Naive thymus-derived CD4-positive, alpha-beta T cell (primary cell): ENCODE measurements at regions of chr20 and their contacts with region 1.

Region 1: GRCh38 chr20:1212607-1213396 is 9.5 kb downstream of the C20orf202 start:
- DNase-seq: peak; percentile 40 to 72 (median 60)
- ATAC-seq: peak; percentile 94
- H3K4me3 ChIP-seq: no peak overlapping the region
- H3K4me3 Mint-ChIP-seq: peak overlapping the region in 4 of 10 donors; percentile 9 to 41 (median 36)
- H3K27ac ChIP-seq: no peak overlapping the region
- H3K27ac Mint-ChIP-seq: peak overlapping the region in 5 of 9 donors; percentile 0 to 97 (median 37)
- H3K4me1 ChIP-seq: peaks cover 5 to 27% of the 10 kb centered on the region in 2 donors
- H3K4me1 Mint-ChIP-seq: peaks cover 21 to 51% (median 36%) of the 10 kb centered on the region in 7 donors
- H3K27me3 ChIP-seq: no peaks in the 10 kb centered on the region
- H3K27me3 Mint-ChIP-seq: peaks cover 0 to 16% (median 0%) of the 10 kb centered on the region in 5 donors

Region 2: DNA sequence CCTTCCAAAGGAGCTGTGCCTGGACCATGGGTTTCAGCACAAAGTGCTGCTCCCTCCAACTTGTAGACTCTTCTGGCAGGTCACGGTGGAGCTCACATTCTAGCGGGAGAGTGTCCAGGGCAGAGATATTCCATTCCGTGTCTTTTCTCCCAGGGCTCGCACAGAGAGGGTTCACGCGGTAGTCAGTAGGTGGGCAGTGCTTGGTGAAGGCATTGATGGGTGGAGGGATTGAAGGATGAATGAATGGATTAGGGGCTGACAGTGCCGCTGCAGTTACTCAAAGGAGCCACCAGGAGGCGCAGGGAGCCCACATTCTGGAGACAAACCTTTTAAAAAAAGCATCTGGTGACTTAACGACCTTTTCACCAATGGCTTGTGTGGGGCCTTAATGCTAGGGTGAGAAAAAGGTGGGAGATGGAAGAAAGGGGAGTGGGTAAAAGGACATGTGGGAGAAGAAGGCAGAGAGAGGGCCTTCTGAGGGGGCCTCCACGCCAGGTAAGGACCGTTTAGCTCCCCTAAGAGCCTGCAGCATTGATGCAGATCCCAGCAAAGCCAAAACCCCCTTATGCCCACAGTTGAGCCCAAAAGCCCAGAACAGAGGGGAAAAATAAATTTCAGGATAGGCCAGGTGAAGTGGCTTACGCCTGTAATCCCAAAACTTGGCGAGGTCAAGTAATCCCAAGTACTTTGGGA is 396.7 kb before region 1 on chr20:
- CTCF ChIA-PET with region 1: interaction called, 8 read pairs
- POLR2A ChIA-PET with region 1: interaction called, 3 read pairs
- intact Hi-C with region 1: loop called in 1 of 2 experiments (anchors 5 kb)
- DNase-seq: peak; percentile 47 to 73 (median 64)
- ATAC-seq: peak; percentile 69
- H3K4me3 ChIP-seq: no peak overlapping the region
- H3K4me3 Mint-ChIP-seq: no peak overlapping the region
- H3K27ac ChIP-seq: no peak overlapping the region
- H3K27ac Mint-ChIP-seq: peak overlapping the region in 4 of 9 donors; percentile 1 to 57 (median 31)
- H3K4me1 ChIP-seq: no peaks in the 10 kb centered on the region
- H3K4me1 Mint-ChIP-seq: peaks cover 5 to 13% (median 9%) of the 10 kb centered on the region in 7 donors
- H3K27me3 ChIP-seq: no peaks in the 10 kb centered on the region
- H3K27me3 Mint-ChIP-seq: peaks cover 9 to 27% (median 14%) of the 10 kb centered on the region in 5 donors

Region 3: GRCh38 chr20:973785-974194 is 239.0 kb before region 1 on chr20:
- CTCF ChIA-PET with region 1: interaction called, 3 read pairs
- POLR2A ChIA-PET with region 1: no interaction called
- intact Hi-C with region 1: loop called (anchors 1 to 5 kb)
- DNase-seq: peak in 5 of 9 donors; percentile 13 to 39 (median 26)
- ATAC-seq: peak; percentile 82
- H3K4me3 ChIP-seq: no peak overlapping the region
- H3K4me3 Mint-ChIP-seq: no peak overlapping the region
- H3K27ac ChIP-seq: no peak overlapping the region
- H3K27ac Mint-ChIP-seq: peak overlapping the region in 1 of 9 donors; percentile 37
- H3K4me1 ChIP-seq: no peaks in the 10 kb centered on the region
- H3K4me1 Mint-ChIP-seq: peaks cover 0 to 4% (median 2%) of the 10 kb centered on the region in 7 donors
- H3K27me3 ChIP-seq: no peaks in the 10 kb centered on the region
- H3K27me3 Mint-ChIP-seq: peaks cover 0 to 7% (median 0%) of the 10 kb centered on the region in 5 donors

Region 4: DNA sequence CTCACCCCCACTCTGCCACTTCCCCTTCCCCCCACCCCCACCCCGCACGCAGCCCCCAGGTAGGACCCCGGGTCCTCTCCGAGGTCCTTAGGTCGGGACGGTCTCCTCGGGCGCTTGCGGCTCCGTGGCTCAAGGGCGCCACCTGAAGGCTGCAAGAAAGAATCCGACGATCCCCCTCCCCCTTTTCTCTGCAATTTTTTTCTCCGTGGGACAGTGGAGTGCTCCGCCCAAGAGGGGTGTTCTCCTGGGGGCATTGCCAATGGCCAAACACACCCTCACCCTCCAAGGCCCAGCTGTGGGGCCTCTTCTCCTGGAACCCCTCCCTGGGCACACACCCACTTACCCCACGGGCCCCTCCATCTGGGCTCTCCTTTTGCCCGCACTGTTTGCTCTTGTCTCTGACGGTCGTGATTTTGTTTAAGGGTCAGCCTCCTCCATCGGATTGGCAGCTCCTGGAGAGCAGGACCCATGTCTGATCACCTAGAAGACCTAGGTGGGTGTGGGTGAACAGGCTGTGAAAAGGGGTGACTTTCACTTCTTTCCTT is 26.9 kb before region 1 on chr20:
- CTCF ChIA-PET with region 1: no interaction called
- POLR2A ChIA-PET with region 1: no interaction called
- intact Hi-C with region 1: loop called in 1 of 2 experiments (anchors 2 kb)
- DNase-seq: peak; percentile 18 to 64 (median 36)
- ATAC-seq: peak; percentile 65
- H3K4me3 ChIP-seq: no peak overlapping the region
- H3K4me3 Mint-ChIP-seq: peak overlapping the region in 9 of 10 donors; percentile 49 to 83 (median 73)
- H3K27ac ChIP-seq: no peak overlapping the region
- H3K27ac Mint-ChIP-seq: peak overlapping the region in 2 of 9 donors; percentile 44 to 86
- H3K4me1 ChIP-seq: no peaks in the 10 kb centered on the region
- H3K4me1 Mint-ChIP-seq: peaks cover 7 to 13% (median 11%) of the 10 kb centered on the region in 7 donors
- H3K27me3 ChIP-seq: peaks cover 0 to 3% of the 10 kb centered on the region in 2 donors
- H3K27me3 Mint-ChIP-seq: peaks cover 19 to 51% (median 33%) of the 10 kb centered on the region in 5 donors

Region 5: DNA sequence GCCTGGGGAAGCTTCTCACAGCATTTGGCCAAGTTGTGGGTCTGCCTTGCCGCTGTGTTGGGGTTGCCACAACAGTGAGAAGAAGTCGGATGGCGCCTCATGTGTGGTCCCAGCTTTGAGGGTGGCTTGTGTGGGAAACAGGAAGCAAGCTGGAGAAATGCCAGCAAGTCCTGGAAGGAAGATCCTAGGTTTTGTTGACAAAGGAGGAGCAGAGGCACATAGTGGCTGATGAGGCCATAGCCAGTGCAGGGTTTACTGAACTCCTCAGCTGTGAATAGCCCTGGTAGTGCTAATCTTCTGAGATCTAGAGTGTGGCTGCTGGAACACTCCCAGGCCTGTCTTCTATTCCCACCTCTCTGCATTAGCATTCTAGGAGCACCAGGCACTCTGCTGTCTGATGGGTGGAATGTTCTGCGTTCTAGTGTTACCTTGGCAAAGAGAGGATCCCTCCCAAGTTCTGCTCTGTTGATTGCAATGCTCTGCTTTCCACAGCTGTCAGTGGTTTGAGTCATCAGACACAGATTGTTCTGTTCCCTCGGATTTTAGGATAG is 78.5 kb after region 1 on chr20:
- CTCF ChIA-PET with region 1: no interaction called
- POLR2A ChIA-PET with region 1: interaction called, 5 read pairs
- intact Hi-C with region 1: loop called in 1 of 2 experiments (anchors 1 kb)
- DNase-seq: no peak
- ATAC-seq: no peak
- H3K4me3 ChIP-seq: no peak overlapping the region
- H3K4me3 Mint-ChIP-seq: no peak overlapping the region
- H3K27ac ChIP-seq: no peak overlapping the region
- H3K27ac Mint-ChIP-seq: peak overlapping the region in 7 of 9 donors; percentile 12 to 81 (median 69)
- H3K4me1 ChIP-seq: peaks cover 0 to 42% of the 10 kb centered on the region in 2 donors
- H3K4me1 Mint-ChIP-seq: peaks cover 22 to 70% (median 59%) of the 10 kb centered on the region in 7 donors
- H3K27me3 ChIP-seq: no peaks in the 10 kb centered on the region
- H3K27me3 Mint-ChIP-seq: no peaks in the 10 kb centered on the region

Region 6: DNA sequence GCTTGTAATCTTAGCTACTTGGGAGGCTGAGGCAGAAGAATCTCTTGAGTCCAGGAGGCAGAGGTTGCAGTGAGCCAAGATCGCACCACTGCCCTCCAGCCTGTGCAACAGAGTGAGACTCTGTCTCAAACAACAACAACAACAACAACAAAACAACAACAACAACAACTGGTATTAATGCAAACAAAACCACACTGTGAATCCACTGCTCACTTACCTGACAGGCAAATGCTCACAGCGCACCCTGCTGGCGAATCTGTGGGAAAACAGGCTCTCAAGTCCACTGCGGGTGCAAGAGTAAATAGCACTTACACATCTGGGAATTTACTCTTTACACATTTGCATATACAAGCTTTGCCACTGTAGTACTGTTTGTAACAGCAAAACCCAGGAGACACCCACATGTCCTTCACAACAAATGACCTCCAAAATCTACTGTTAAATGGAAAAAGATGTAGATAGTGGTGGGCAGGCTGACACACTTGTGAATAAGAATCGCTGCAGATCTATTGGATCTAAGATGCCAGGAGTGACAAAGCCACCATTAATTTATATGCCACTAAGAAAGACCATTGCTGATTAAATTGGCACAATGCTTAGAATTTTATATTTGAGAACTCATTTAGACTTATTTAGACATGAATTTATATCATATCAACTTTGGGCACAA is 224.6 kb after region 1 on chr20:
- CTCF ChIA-PET with region 1: interaction called, 6 read pairs
- POLR2A ChIA-PET with region 1: no interaction called
- intact Hi-C with region 1: loop called in 1 of 2 experiments (anchors 2 kb)
- DNase-seq: peak; percentile 55 to 79 (median 72)
- ATAC-seq: peak; percentile 72
- H3K4me3 ChIP-seq: no peak overlapping the region
- H3K4me3 Mint-ChIP-seq: peak overlapping the region in 1 of 10 donors; percentile 35
- H3K27ac ChIP-seq: no peak overlapping the region
- H3K27ac Mint-ChIP-seq: peak overlapping the region in 3 of 9 donors; percentile 8 to 73 (median 16)
- H3K4me1 ChIP-seq: peaks cover 11 to 17% of the 10 kb centered on the region in 2 donors
- H3K4me1 Mint-ChIP-seq: peaks cover 25 to 53% (median 49%) of the 10 kb centered on the region in 7 donors
- H3K27me3 ChIP-seq: no peaks in the 10 kb centered on the region
- H3K27me3 Mint-ChIP-seq: peaks cover 0 to 19% (median 0%) of the 10 kb centered on the region in 5 donors